GM12878 (cell line): ENCODE measurements at regions of chr6 and their contacts with region 1.

Region 1: GRCh38 chr6:81906709-81907204 is 154.3 kb upstream of the TENT5A start:
- DNase-seq: peak; percentile 44
- ATAC-seq: peak; percentile 54
- H3K4me3 ChIP-seq: no peak overlapping the region
- H3K27ac ChIP-seq: no peak overlapping the region
- H3K4me1 ChIP-seq: no peaks in the 10 kb centered on the region
- H3K27me3 ChIP-seq: no peaks in the 10 kb centered on the region
- CTCF ChIP-seq: no peak
- EP300 ChIP-seq: 0 out of 4 replicates have a peak, but pooled peaks of 1 of the 2 experiments have one; percentile 5
- POLR2A ChIP-seq: no peak
- RAD21 ChIP-seq: no peak

Region 2: GRCh38 chr6:81997091-81997926 is 90.6 kb after region 1 on chr6:
- CTCF ChIA-PET with region 1: interaction called, 3 read pairs
- POLR2A ChIA-PET with region 1: interaction called, 3 read pairs
- RAD21 ChIA-PET with region 1: interaction called, 15 read pairs
- SMC1A ChIA-PET with region 1: interaction called, 23 read pairs
- in situ Hi-C with region 1: no loop called
- intact Hi-C with region 1: no loop called
- DNase-seq: peak; percentile 57
- ATAC-seq: peak; percentile 74
- H3K4me3 ChIP-seq: no peak overlapping the region
- H3K27ac ChIP-seq: no peak overlapping the region
- H3K4me1 ChIP-seq: peaks cover 5% of the 10 kb centered on the region
- H3K27me3 ChIP-seq: no peaks in the 10 kb centered on the region
- CTCF ChIP-seq: no peak
- EP300 ChIP-seq: peak; percentile 37 to 63; a peak in 2 of 4 replicates
- POLR2A ChIP-seq: no peak
- RAD21 ChIP-seq: no peak

Region 3: DNA sequence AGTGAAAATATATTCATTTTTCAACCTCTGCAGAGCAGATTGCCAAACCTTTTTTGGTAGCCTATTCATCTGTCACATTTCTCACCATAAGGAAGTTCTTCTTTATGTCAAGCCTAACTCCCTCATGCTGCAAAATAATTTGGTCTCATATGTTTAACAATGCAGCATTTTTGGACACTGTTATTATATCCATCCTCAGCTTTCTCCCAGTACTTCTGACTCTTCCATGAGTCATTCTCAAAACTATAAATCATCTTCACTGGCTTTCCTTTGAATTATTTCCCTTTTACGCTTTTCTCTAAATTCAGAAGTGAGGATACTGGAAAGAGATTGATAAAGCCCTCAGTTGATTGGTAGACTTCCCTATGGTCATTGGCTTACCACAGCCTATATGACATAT is 649.0 kb after region 1 on chr6:
- CTCF ChIA-PET with region 1: no interaction called
- POLR2A ChIA-PET with region 1: no interaction called
- RAD21 ChIA-PET with region 1: no interaction called
- SMC1A ChIA-PET with region 1: no interaction called
- in situ Hi-C with region 1: no loop called
- intact Hi-C with region 1: no loop called
- DNase-seq: no peak
- ATAC-seq: no peak
- H3K4me3 ChIP-seq: no peak overlapping the region
- H3K27ac ChIP-seq: no peak overlapping the region
- H3K4me1 ChIP-seq: no peaks in the 10 kb centered on the region
- H3K27me3 ChIP-seq: no peaks in the 10 kb centered on the region
- CTCF ChIP-seq: no peak
- EP300 ChIP-seq: no peak
- POLR2A ChIP-seq: no peak
- RAD21 ChIP-seq: no peak